SK-N-SH (cell line): ENCODE measurements at regions of chr1 and their contacts with region 1.

Region 1: GRCh38 chr1:171781176-171781875 is at the start of gene METTL13:
- DNase-seq: peak; percentile 96
- H3K4me3 ChIP-seq: peak within 1 kb of the TSS; percentile 78 to 79
- H3K27ac ChIP-seq: peak within 1 kb of the TSS; percentile 84 to 96
- H3K4me1 ChIP-seq: peaks cover 9 to 29% of the 10 kb centered on the region in 2 experiments; a peak in 2 of 4 replicates
- H3K27me3 ChIP-seq: no peaks in the 10 kb centered on the region
- CTCF ChIP-seq: no peak
- EP300 ChIP-seq: peak in 1 of 2 experiments; percentile 11; a peak in 1 of 4 replicates
- RAD21 ChIP-seq: no peak
- polyA plus RNA-seq, gene METTL13: 32.7 and 41.2 TPM in 2 replicates

Region 2: GRCh38 chr1:171741872-171742576 is 39.3 kb before region 1 on chr1 and contains the start of gene VAMP4:
- CTCF ChIA-PET with region 1: interaction called, 7 read pairs
- POLR2A ChIA-PET with region 1: interaction called, 12 read pairs
- DNase-seq: peak; percentile 92
- H3K4me3 ChIP-seq: peak within 1 kb of the TSS; percentile 59 to 96
- H3K27ac ChIP-seq: peak within 1 kb of the TSS; percentile 95 to 100
- H3K4me1 ChIP-seq: peaks cover 19 to 22% of the 10 kb centered on the region in 2 experiments
- H3K27me3 ChIP-seq: no peaks in the 10 kb centered on the region
- CTCF ChIP-seq: no peak
- EP300 ChIP-seq: no peak; a peak in 1 of 4 replicates
- RAD21 ChIP-seq: no peak
- polyA plus RNA-seq, gene VAMP4: 2.5 and 3.3 TPM in 2 replicates

Region 3: GRCh38 chr1:171858696-171859095 is 77.4 kb after region 1 on chr1:
- CTCF ChIA-PET with region 1: no interaction called
- POLR2A ChIA-PET with region 1: no interaction called
- DNase-seq: no peak
- H3K4me3 ChIP-seq: no peak overlapping the region
- H3K27ac ChIP-seq: no peak overlapping the region
- H3K4me1 ChIP-seq: no peaks in the 10 kb centered on the region
- H3K27me3 ChIP-seq: no peaks in the 10 kb centered on the region
- CTCF ChIP-seq: no peak
- EP300 ChIP-seq: no peak
- RAD21 ChIP-seq: no peak